Esophagus muscularis mucosa (tissue), 4 donors: ENCODE measurements at regions of chr12 and their contacts with region 1.

Region 1: GRCh38 chr12:108731105-108731865 is at the start of gene CORO1C:
- DNase-seq: peak; percentile 99
- H3K4me3 ChIP-seq: peak within 1 kb of the TSS; percentile 83 to 95 (median 92)
- H3K27ac ChIP-seq: peak within 1 kb of the TSS; percentile 99 to 100 (median 99)
- H3K4me1 ChIP-seq: peaks cover 22 to 54% (median 45%) of the 10 kb centered on the region in 4 donors
- H3K27me3 ChIP-seq: no peaks in the 10 kb centered on the region
- CTCF ChIP-seq: peak; percentile 92 to 95 (median 93)
- EP300 ChIP-seq: no peak
- POLR2A ChIP-seq: peak; percentile 94
- total RNA-seq, gene CORO1C: 221 to 441 (median 315) TPM

Region 2: DNA sequence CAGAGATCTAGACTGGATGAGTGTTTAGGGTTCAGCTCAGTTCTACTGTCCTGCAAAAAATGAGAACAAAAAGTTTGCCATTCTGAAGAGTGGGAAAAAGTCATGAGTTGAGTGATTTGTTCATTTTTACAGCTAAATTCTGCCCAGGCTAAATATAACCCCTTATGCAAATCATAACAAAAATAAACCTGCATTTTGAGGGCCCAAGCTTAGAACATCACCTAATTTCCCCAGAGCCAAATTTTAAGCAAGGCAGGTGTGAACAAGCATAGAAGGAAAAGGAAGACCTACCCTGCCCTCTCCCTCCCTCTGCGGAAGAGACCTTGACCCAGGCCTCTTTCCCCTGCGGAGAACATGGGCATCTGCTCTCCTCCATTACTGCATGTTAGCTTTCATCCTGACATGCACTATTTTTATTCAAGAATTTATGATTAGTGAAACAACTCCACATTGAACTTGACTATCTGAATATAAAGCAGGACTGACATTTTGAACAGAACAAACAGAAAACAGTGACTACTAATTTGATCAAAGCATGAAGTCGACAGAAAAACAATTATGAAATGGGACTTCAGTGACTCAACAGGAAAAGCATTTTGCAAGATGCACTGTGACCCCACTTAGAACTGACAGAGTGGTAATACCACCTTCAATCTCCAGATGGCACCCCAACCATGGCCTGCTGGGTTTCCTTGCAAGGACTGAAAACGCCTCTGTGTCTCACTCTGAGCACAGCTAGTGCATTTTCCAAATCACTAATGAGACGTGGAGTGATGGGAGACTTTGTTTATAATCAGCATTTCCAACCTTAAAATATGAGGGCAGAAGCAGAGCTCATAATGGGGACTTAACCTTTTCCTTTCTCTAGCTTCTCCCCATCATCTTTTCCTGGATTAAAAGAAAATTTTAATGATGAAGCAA is 66.7 kb before region 1 on chr12:
- intact Hi-C with region 1: loop called (anchors 2 kb)
- DNase-seq: peak; percentile 97
- H3K4me3 ChIP-seq: peak overlapping the region in 1 of 4 donors; percentile 5
- H3K27ac ChIP-seq: peak overlapping the region; percentile 83 to 90 (median 84)
- H3K4me1 ChIP-seq: peaks cover 54 to 88% (median 80%) of the 10 kb centered on the region in 4 donors
- H3K27me3 ChIP-seq: no peaks in the 10 kb centered on the region
- CTCF ChIP-seq: peak in 2 of 3 experiments; percentile 96 to 97
- EP300 ChIP-seq: no peak
- POLR2A ChIP-seq: no peak

Region 3: DNA sequence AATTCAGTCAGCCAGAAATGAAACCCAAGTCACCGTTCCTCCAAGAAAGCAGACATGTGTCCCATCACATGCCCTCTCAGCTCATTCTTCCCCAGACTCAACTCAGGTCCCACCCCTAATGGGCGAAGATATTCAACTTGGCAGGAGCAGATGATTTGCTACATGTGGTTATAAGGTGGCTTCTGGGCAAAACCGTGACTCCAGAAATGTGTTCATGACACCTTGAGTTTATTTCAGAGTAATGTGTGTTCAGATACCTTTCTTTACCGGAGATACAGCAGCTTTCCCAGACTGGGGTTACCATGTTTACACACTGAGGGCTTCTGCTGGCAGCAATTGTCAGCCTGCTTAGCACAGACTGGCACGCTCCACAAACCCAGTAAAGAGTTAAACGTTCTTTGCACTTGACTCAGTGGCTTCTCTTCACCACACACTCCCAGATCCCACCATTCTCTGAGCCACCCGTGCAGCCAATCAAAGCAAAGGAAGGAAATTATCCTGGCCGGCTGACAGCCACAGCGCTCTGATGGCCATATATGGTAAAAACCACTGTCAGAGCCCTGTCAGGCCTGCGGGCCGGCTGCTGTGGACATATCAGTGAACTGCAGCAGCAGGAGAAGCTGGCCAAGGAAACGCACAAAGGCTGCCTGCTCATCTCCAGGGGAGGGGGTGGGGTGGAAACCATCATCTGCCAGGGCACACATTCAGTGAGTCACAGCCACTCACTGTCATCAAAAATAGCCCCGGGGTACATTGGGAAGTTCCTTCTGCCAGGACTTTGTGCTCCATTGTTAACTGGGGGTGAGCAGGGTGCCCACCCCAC is 39.9 kb before region 1 on chr12:
- intact Hi-C with region 1: loop called (anchors 5 kb)
- DNase-seq: peak; percentile 99
- H3K4me3 ChIP-seq: peak overlapping the region; percentile 27 to 45 (median 36)
- H3K27ac ChIP-seq: peak overlapping the region; percentile 94 to 95 (median 94)
- H3K4me1 ChIP-seq: peaks cover 75 to 100% (median 97%) of the 10 kb centered on the region in 4 donors
- H3K27me3 ChIP-seq: no peaks in the 10 kb centered on the region
- CTCF ChIP-seq: peak in 2 of 3 experiments; percentile 41 to 71
- EP300 ChIP-seq: peak; percentile 64
- POLR2A ChIP-seq: peak; percentile 8

Region 4: GRCh38 chr12:108803428-108804105 is 72.3 kb after region 1 on chr12:
- intact Hi-C with region 1: loop called (anchors 5 kb)
- DNase-seq: peak; percentile 96
- H3K4me3 ChIP-seq: peak overlapping the region in 1 of 4 donors; percentile 39
- H3K27ac ChIP-seq: peak overlapping the region; percentile 90 to 95 (median 94)
- H3K4me1 ChIP-seq: peaks cover 69 to 87% (median 83%) of the 10 kb centered on the region in 4 donors
- H3K27me3 ChIP-seq: no peaks in the 10 kb centered on the region
- CTCF ChIP-seq: peak; percentile 96 to 99 (median 98)
- EP300 ChIP-seq: no peak
- POLR2A ChIP-seq: no peak

Region 5: GRCh38 chr12:108850854-108851573 is 119.7 kb after region 1 on chr12:
- intact Hi-C with region 1: loop called (anchors 5 kb)
- DNase-seq: no peak
- H3K4me3 ChIP-seq: no peak overlapping the region
- H3K27ac ChIP-seq: peak overlapping the region; percentile 5 to 96 (median 91)
- H3K4me1 ChIP-seq: peaks cover 88 to 93% (median 90%) of the 10 kb centered on the region in 4 donors
- H3K27me3 ChIP-seq: no peaks in the 10 kb centered on the region
- CTCF ChIP-seq: no peak
- EP300 ChIP-seq: no peak
- POLR2A ChIP-seq: no peak